Endothelial cell of umbilical vein (primary cell): ENCODE measurements at regions of chr6 and their contacts with region 1.

Region 1: GRCh38 chr6:167647306-167647705 is 179.4 kb upstream of the AFDN start:
- DNase-seq: peak; percentile 38
- H3K4me3 ChIP-seq: no peak overlapping the region
- H3K27ac ChIP-seq: peak overlapping the region; percentile 57
- H3K4me1 ChIP-seq: peaks cover 18% of the 10 kb centered on the region
- H3K27me3 ChIP-seq: no peaks in the 10 kb centered on the region
- CTCF ChIP-seq: no peak
- POLR2A ChIP-seq: no peak

Region 2: GRCh38 chr6:167676666-167677421 is 29.5 kb after region 1 on chr6:
- CTCF ChIA-PET with region 1: no interaction called
- POLR2A ChIA-PET with region 1: no interaction called
- dilution Hi-C with region 1: no loop called
- intact Hi-C with region 1: loop called (anchors 1 kb)
- DNase-seq: peak; percentile 47
- H3K4me3 ChIP-seq: no peak overlapping the region
- H3K27ac ChIP-seq: no peak overlapping the region
- H3K4me1 ChIP-seq: peaks cover 22% of the 10 kb centered on the region
- H3K27me3 ChIP-seq: peaks cover 0 to 4% of the 10 kb centered on the region in 2 experiments
- CTCF ChIP-seq: no peak
- POLR2A ChIP-seq: no peak

Region 3: DNA sequence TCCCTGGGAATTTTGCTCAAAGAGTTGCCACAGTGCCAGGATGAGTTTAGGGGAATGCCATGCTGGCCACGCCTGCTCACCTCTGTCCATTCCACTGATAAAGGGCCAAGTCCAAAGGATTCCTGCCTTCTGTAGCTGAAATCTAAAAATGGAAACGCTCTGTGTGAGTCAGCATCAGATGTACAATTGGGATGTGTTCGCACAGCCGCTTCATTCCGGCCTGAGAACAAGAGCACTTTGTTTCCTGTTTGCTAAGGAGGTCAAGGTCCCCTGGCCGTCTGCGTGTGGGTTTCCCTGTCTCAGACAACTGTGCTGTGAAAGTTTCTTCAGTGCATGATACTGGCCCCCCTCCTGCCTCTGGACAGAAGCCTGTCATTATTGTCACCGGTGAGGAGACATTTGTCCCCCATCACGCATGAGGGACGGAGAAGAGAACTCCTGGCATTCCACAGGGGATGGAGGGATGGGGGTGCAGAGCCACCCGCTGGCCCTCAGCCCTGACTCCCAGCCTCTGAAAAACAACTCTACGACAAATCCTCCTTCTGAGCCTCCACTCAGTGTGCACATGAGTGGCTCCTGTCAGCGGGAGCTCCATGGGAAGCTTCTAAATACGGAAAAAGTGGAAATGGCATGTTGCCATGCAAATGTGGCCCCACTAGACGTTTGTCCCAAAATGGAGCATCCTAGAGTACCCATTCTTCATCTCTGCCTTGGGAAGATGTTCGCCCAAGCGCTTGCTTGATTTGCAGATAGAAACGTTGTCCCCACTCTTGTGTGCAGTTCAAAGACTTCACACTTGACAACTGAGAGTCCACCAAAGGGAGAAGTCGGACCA is 35.9 kb after region 1 on chr6:
- CTCF ChIA-PET with region 1: interaction called, 3 read pairs
- POLR2A ChIA-PET with region 1: no interaction called
- dilution Hi-C with region 1: no loop called
- intact Hi-C with region 1: loop called (anchors 1 kb)
- DNase-seq: peak; percentile 94
- H3K4me3 ChIP-seq: no peak overlapping the region
- H3K27ac ChIP-seq: peak overlapping the region; percentile 76
- H3K4me1 ChIP-seq: peaks cover 24% of the 10 kb centered on the region
- H3K27me3 ChIP-seq: peaks cover 0 to under 1% of the 10 kb centered on the region in 2 experiments
- CTCF ChIP-seq: no peak
- POLR2A ChIP-seq: no peak

Region 4: GRCh38 chr6:167699141-167699931 is 52.0 kb after region 1 on chr6:
- CTCF ChIA-PET with region 1: interaction called, 7 read pairs
- POLR2A ChIA-PET with region 1: interaction called, 4 read pairs
- dilution Hi-C with region 1: no loop called
- intact Hi-C with region 1: loop called (anchors 1 kb)
- DNase-seq: peak; percentile 87
- H3K4me3 ChIP-seq: peak overlapping the region in 1 of 3 experiments; percentile 42
- H3K27ac ChIP-seq: peak overlapping the region; percentile 99
- H3K4me1 ChIP-seq: peaks cover 22% of the 10 kb centered on the region
- H3K27me3 ChIP-seq: no peaks in the 10 kb centered on the region
- CTCF ChIP-seq: no peak
- POLR2A ChIP-seq: no peak